ENCODE measurements at regions of chr16 and their contacts with region 1.

Region 1: DNA sequence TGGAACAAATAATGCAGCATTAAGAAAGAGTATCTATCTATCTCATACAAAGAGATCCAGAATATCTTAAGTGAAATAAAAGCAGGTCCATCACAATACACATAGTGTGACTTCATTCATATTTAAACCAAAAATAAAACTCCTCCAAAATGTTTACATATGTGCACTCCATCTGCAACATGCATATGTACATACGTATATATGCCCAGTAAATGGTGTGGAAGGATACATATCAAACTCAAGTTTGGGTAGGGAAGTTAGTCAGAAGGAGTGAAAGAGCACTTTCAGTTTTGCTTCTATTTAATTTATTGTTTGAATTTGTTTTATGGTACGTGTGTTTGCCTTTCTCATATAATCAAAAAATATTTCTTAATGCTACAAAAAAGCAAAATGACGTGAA is 12.0 kb upstream of the ADAT1 start:
- DNase-seq: no peak
- H3K4me3 ChIP-seq: no peak overlapping the region
- H3K27ac ChIP-seq: no peak overlapping the region
- H3K4me1 ChIP-seq: no peaks in the 10 kb centered on the region
- H3K27me3 ChIP-seq: no peaks in the 10 kb centered on the region
- CTCF ChIP-seq: no peak

Region 2: GRCh38 chr16:75130150-75130771 is 504.8 kb before region 1 on chr16:
- CTCF ChIA-PET with region 1: no interaction called
- POLR2A ChIA-PET with region 1: no interaction called
- intact Hi-C with region 1: no loop called
- DNase-seq: peak in 1 of 2 experiments; percentile 54
- H3K4me3 ChIP-seq: no peak overlapping the region
- H3K27ac ChIP-seq: no peak overlapping the region
- H3K4me1 ChIP-seq: peaks cover 18% of the 10 kb centered on the region
- H3K27me3 ChIP-seq: peaks cover 9% of the 10 kb centered on the region; the same call in 1 of the 2 replicates
- CTCF ChIP-seq: no peak

Region 3: GRCh38 chr16:75593825-75594820 is 40.9 kb before region 1 on chr16:
- CTCF ChIA-PET with region 1: interaction called, 13 read pairs
- POLR2A ChIA-PET with region 1: no interaction called
- intact Hi-C with region 1: no loop called
- DNase-seq: no peak
- H3K4me3 ChIP-seq: no peak overlapping the region
- H3K27ac ChIP-seq: no peak overlapping the region
- H3K4me1 ChIP-seq: no peaks in the 10 kb centered on the region
- H3K27me3 ChIP-seq: no peaks in the 10 kb centered on the region
- CTCF ChIP-seq: no peak

Region 4: DNA sequence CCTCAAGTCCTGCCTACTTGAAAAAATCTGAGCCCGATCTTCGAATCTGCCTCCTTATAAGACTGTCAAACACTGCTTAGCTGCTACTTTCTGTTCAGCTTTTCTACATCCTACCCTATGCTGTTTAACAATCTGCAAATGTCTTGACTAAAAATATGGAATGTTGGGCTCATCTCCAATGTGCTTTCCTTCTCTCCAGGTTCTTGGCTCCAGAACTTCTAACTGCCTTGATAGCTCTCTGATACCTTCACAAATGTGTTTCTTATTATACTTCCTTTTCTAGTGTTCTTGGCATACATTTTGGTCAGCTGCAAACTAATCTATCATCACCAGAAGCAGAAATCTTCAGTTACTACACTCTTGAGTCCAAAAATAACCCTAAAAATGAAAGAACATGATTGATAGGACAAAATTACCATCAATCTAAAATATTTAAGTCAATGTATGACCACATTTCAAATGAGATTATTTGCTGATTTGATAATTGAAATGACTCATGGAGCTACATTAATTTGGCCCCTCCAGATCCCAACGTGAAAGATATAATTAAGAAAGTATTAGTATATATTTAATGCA is 1183.7 kb after region 1 on chr16:
- CTCF ChIA-PET with region 1: no interaction called
- POLR2A ChIA-PET with region 1: no interaction called
- intact Hi-C with region 1: no loop called
- DNase-seq: no peak
- H3K4me3 ChIP-seq: no peak overlapping the region
- H3K27ac ChIP-seq: no peak overlapping the region
- H3K4me1 ChIP-seq: no peaks in the 10 kb centered on the region
- H3K27me3 ChIP-seq: peaks cover 41% of the 10 kb centered on the region
- CTCF ChIP-seq: no peak

Measured in PC-9 (cell line).